CD4-positive, alpha-beta memory T cell (primary cell): ENCODE measurements at regions of chr19 and their contacts with region 1.

Region 1: GRCh38 chr19:33186431-33187182 is 7.5 kb upstream of the LRP3 start:
- DNase-seq: no peak
- H3K4me3 ChIP-seq: no peak overlapping the region
- H3K4me3 Mint-ChIP-seq: no peak overlapping the region
- H3K27ac ChIP-seq: no peak overlapping the region
- H3K27ac Mint-ChIP-seq: no peak overlapping the region
- H3K4me1 ChIP-seq: peaks cover 6% of the 10 kb centered on the region
- H3K4me1 Mint-ChIP-seq: peaks cover 0 to 11% (median under 1%) of the 10 kb centered on the region in 4 donors
- H3K27me3 ChIP-seq: no peaks in the 10 kb centered on the region
- H3K27me3 Mint-ChIP-seq: peaks cover 0 to 7% of the 10 kb centered on the region in 2 donors

Region 2: GRCh38 chr19:33071887-33072286 is 114.7 kb before region 1 on chr19:
- CTCF ChIA-PET with region 1: no interaction called
- POLR2A ChIA-PET with region 1: no interaction called
- intact Hi-C with region 1: no loop called
- DNase-seq: no peak
- H3K4me3 ChIP-seq: no peak overlapping the region
- H3K4me3 Mint-ChIP-seq: no peak overlapping the region
- H3K27ac ChIP-seq: no peak overlapping the region
- H3K27ac Mint-ChIP-seq: peak overlapping the region in 2 of 7 donors; percentile 10 to 22
- H3K4me1 ChIP-seq: no peaks in the 10 kb centered on the region
- H3K4me1 Mint-ChIP-seq: no peaks in the 10 kb centered on the region
- H3K27me3 ChIP-seq: no peaks in the 10 kb centered on the region
- H3K27me3 Mint-ChIP-seq: peaks cover 0 to 3% of the 10 kb centered on the region in 2 donors

Region 3: DNA sequence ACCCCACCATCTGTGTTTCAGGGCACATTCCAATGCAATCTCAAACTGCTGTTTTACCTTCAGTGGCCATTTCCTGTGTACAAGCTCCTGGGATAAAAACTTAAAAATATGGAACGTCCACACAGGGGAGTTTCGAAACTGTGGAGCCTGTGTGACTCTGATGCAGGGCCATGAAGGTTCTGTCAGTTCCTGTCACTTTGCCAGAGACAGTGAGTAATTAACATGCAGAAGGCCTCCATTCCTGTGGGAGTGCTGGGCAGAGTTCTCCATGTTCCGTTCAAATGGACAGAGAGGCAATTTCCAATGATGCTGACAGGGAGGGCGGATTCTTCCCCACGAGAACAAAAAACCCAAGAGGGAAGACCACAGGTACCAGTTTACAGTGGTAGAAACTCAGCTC is 30.3 kb before region 1 on chr19:
- CTCF ChIA-PET with region 1: interaction called, 30 read pairs
- POLR2A ChIA-PET with region 1: interaction called, 3 read pairs
- intact Hi-C with region 1: no loop called
- DNase-seq: no peak
- H3K4me3 ChIP-seq: no peak overlapping the region
- H3K4me3 Mint-ChIP-seq: no peak overlapping the region
- H3K27ac ChIP-seq: no peak overlapping the region
- H3K27ac Mint-ChIP-seq: no peak overlapping the region
- H3K4me1 ChIP-seq: peaks cover 29% of the 10 kb centered on the region
- H3K4me1 Mint-ChIP-seq: peaks cover 20 to 37% (median 28%) of the 10 kb centered on the region in 4 donors
- H3K27me3 ChIP-seq: no peaks in the 10 kb centered on the region
- H3K27me3 Mint-ChIP-seq: no peaks in the 10 kb centered on the region

Region 4: GRCh38 chr19:33163481-33163880 is 23.1 kb before region 1 on chr19:
- CTCF ChIA-PET with region 1: interaction called, 30 read pairs
- POLR2A ChIA-PET with region 1: interaction called, 3 read pairs
- intact Hi-C with region 1: no loop called
- DNase-seq: no peak
- H3K4me3 ChIP-seq: no peak overlapping the region
- H3K4me3 Mint-ChIP-seq: no peak overlapping the region
- H3K27ac ChIP-seq: no peak overlapping the region
- H3K27ac Mint-ChIP-seq: no peak overlapping the region
- H3K4me1 ChIP-seq: peaks cover 24% of the 10 kb centered on the region
- H3K4me1 Mint-ChIP-seq: peaks cover 19 to 35% (median 26%) of the 10 kb centered on the region in 4 donors
- H3K27me3 ChIP-seq: no peaks in the 10 kb centered on the region
- H3K27me3 Mint-ChIP-seq: no peaks in the 10 kb centered on the region